Activated T-helper 1 cell treated with anti-CD3 and anti-CD28 coated beads, Interleukin-12 subunit alpha, Interleukin-12 subunit beta, Interleukin-2, Interleukin-4 antibody, amounts not matched to agents 30 ng/mL and 10 ng/mL and 1 ng/mL, durations not matched to agents 14 hours and 24 hours and 36 hours (primary cell): ENCODE measurements at regions of chr5 and their contacts with region 1.

Region 1: GRCh38 chr5:89694026-89694550 is 715.5 kb downstream of the CETN3 start:
- DNase-seq: no peak
- H3K4me3 Mint-ChIP-seq: no peak overlapping the region
- H3K27ac Mint-ChIP-seq: no peak overlapping the region
- H3K4me1 Mint-ChIP-seq: no peaks in the 10 kb centered on the region
- H3K27me3 Mint-ChIP-seq: no peaks in the 10 kb centered on the region

Region 2: GRCh38 chr5:88226881-88227450 is 1467.1 kb before region 1 on chr5:
- intact Hi-C with region 1: loop called (anchors 5 kb)
- DNase-seq: no peak
- H3K4me3 Mint-ChIP-seq: no peak overlapping the region
- H3K27ac Mint-ChIP-seq: no peak overlapping the region
- H3K4me1 Mint-ChIP-seq: peaks cover 16% of the 10 kb centered on the region
- H3K27me3 Mint-ChIP-seq: no peaks in the 10 kb centered on the region